Left colon (tissue), 2 donors: ENCODE measurements at regions of chr12 and their contacts with region 1.

Region 1: GRCh38 chr12:98644711-98645402 is at the starts of genes APAF1 and IKBIP:
- DNase-seq: peak; percentile 97 to 99
- ATAC-seq: peak; percentile 96
- total RNA-seq, gene APAF1: 34.8 to 38.9 TPM
- total RNA-seq, gene IKBIP: 2.2 to 4.9 TPM

Region 2: DNA sequence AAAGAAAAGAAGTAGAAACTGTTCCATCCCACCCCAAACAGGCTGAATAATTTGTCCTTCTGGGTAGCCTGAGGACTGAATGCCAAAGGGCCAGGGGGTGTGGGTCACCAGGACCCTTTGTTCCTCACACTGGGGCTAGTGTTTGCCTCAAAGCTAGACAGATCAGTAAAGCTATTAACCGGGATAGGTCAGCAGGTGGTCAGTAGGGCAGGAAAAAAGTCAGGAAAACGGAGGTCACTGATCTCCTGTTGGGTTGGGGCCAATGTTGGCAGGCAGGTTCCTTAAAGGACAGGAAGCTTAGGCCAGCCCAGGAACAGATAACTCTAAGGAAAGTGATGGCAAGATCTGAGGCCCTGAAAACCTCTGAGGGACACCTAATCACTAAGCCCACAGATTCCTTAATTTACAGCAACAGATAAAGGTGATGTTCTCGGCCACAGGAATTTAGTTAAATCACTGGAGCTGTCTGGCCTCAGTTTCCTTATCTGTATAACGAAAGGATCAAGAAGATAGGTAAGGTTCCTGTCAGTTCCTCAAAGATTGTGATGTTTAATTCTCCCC is 152.2 kb before region 1 on chr12:
- intact Hi-C with region 1: no loop called
- DNase-seq: no peak
- ATAC-seq: no peak

Region 3: GRCh38 chr12:98559666-98560065 is 85.2 kb before region 1 on chr12:
- intact Hi-C with region 1: no loop called
- DNase-seq: no peak
- ATAC-seq: no peak

Region 4: GRCh38 chr12:98593351-98594049 is 51.4 kb before region 1 on chr12 and contains the start of gene SLC25A3:
- intact Hi-C with region 1: loop called in 1 of 2 experiments (anchors 10 kb)
- DNase-seq: peak; percentile 97 to 98
- ATAC-seq: peak; percentile 96
- total RNA-seq, gene SLC25A3: 712 to 806 TPM